GM12878 (cell line): ENCODE measurements at regions of chr13 and their contacts with region 1.

Region 1: DNA sequence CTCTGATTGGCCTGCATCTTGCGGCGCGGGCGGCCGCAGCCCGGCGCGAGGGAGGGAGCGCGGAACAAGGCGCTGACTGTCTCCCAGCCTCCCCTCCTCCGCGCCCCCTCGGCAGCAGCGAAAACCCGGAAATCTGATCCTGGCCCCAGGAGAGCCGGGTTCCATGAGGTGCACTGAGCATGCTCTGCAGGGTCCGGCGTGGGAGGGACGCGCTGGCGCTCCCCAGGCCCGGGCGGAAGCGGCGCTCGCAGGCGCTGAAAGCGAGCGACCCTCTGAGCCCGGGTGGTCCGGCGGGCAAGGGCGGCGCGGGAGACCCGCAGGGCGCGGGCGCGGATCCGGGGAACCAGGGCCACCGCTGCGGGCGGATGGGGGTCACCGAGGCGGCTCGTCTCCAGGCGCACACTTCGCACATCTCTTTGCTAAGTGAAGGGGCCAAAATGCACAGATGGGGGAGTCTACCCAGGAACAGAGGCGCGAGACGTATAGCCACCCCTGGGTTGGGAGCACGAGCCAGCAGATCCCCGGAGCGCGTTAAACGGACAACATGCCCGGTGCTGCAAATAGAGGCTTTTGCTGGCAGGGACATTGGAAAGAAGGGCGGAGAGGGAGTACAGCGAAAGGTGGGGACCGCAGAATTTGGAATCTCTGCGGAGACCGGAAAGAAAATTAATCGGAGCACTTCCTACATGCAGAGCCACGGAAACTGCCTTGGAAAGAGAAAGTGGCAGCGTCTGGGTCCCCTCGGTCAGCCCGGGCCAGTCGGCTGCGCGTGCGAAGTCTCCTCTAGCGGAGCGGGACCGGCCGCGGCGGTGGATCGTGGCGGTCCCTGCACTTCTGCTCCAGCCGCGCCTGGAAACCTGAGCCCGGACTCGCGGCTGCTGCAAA is 510 bp upstream of the PCDH9 start:
- DNase-seq: peak; percentile 15
- ATAC-seq: peak; percentile 99
- H3K4me3 ChIP-seq: peak overlapping the region; percentile 73
- H3K27ac ChIP-seq: no peak overlapping the region
- H3K4me1 ChIP-seq: no peaks in the 10 kb centered on the region; the same call in 1 of the 2 replicates
- H3K27me3 ChIP-seq: peaks cover 1 to 7% of the 10 kb centered on the region in 2 experiments; a peak in 3 of 4 replicates
- CTCF ChIP-seq: no peak
- EP300 ChIP-seq: no peak
- POLR2A ChIP-seq: no peak; the same call in 1 of the 2 replicates
- RAD21 ChIP-seq: no peak

Region 2: DNA sequence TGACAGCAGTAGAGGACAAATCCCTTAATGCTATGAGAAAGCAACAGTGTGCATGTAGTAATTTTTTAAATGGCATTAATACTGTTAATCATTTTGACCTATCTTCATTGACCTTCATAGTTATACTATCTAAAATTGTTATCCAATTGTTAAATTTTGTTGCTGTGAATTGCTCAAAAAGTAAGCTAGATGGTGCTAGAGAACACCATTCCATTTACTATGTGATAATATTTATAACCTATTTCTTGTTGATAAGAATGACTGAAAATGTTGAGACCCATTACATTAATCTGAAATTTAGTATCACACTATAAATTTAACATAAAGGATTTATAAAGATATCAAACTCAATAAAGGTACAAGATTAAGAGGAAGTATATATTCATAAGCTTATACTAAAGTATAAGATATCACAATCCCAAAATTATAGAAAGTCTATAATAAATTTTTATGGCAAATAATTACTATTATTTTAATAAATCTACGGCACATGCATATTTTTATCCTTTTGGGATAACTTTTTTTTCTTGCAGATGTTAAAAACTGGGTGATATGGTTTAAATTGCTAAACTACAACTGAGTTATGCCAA is 1573.8 kb before region 1 on chr13:
- CTCF ChIA-PET with region 1: no interaction called
- POLR2A ChIA-PET with region 1: no interaction called
- RAD21 ChIA-PET with region 1: no interaction called
- SMC1A ChIA-PET with region 1: no interaction called
- in situ Hi-C with region 1: loop called (anchors 5 kb)
- intact Hi-C with region 1: loop called (anchors 5 kb)
- DNase-seq: no peak
- ATAC-seq: peak; percentile 52; the same call in 1 of the 3 replicates
- H3K4me3 ChIP-seq: no peak overlapping the region
- H3K27ac ChIP-seq: no peak overlapping the region
- H3K4me1 ChIP-seq: no peaks in the 10 kb centered on the region
- H3K27me3 ChIP-seq: no peaks in the 10 kb centered on the region
- CTCF ChIP-seq: peak in 1 of 3 experiments; percentile 27; a peak in 3 of 6 replicates
- EP300 ChIP-seq: no peak
- POLR2A ChIP-seq: no peak
- RAD21 ChIP-seq: 0 out of 2 replicates have a peak, but pooled peaks have one; percentile 8

Region 3: GRCh38 chr13:65926750-65927171 is 1303.9 kb before region 1 on chr13:
- CTCF ChIA-PET with region 1: no interaction called
- POLR2A ChIA-PET with region 1: no interaction called
- RAD21 ChIA-PET with region 1: no interaction called
- SMC1A ChIA-PET with region 1: no interaction called
- in situ Hi-C with region 1: no loop called
- intact Hi-C with region 1: loop called (anchors 5 kb)
- DNase-seq: no peak
- ATAC-seq: peak; percentile 76
- H3K4me3 ChIP-seq: no peak overlapping the region
- H3K27ac ChIP-seq: no peak overlapping the region
- H3K4me1 ChIP-seq: no peaks in the 10 kb centered on the region
- H3K27me3 ChIP-seq: no peaks in the 10 kb centered on the region
- CTCF ChIP-seq: peak in 2 of 3 experiments; percentile 35 to 38; a peak in 3 of 6 replicates
- EP300 ChIP-seq: no peak
- POLR2A ChIP-seq: no peak
- RAD21 ChIP-seq: no peak

Region 4: GRCh38 chr13:66543780-66544179 is 686.9 kb before region 1 on chr13:
- CTCF ChIA-PET with region 1: no interaction called
- POLR2A ChIA-PET with region 1: no interaction called
- RAD21 ChIA-PET with region 1: no interaction called
- SMC1A ChIA-PET with region 1: no interaction called
- in situ Hi-C with region 1: no loop called
- intact Hi-C with region 1: loop called (anchors 10 kb)
- DNase-seq: no peak
- ATAC-seq: peak; percentile 64
- H3K4me3 ChIP-seq: no peak overlapping the region
- H3K27ac ChIP-seq: no peak overlapping the region
- H3K4me1 ChIP-seq: no peaks in the 10 kb centered on the region
- H3K27me3 ChIP-seq: no peaks in the 10 kb centered on the region
- CTCF ChIP-seq: peak in 1 of 3 experiments; percentile 28; a peak in 2 of 6 replicates
- EP300 ChIP-seq: no peak
- POLR2A ChIP-seq: no peak
- RAD21 ChIP-seq: no peak

Region 5: DNA sequence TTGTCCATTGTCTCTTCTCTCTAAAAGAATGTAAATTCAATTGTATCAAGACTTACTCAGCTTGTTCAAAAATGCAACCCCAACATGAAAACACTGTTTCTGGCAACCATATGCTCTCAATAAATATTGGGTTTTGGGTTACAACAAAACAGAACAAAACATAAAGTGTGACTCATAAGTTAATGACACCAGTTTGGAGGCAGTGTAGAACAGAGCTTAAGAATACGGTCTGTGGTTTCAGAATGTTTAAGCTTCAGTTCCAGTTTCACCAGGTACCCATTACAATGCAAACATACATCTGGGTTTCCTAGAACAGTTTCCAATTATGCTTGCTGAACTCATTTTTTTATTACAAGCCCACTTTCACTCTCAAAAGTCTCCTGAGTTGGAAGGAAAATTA is 285.2 kb after region 1 on chr13:
- CTCF ChIA-PET with region 1: no interaction called
- POLR2A ChIA-PET with region 1: no interaction called
- RAD21 ChIA-PET with region 1: no interaction called
- SMC1A ChIA-PET with region 1: no interaction called
- in situ Hi-C with region 1: no loop called
- intact Hi-C with region 1: no loop called
- DNase-seq: no peak
- ATAC-seq: peak; percentile 97
- H3K4me3 ChIP-seq: no peak overlapping the region
- H3K27ac ChIP-seq: no peak overlapping the region
- H3K4me1 ChIP-seq: no peaks in the 10 kb centered on the region
- H3K27me3 ChIP-seq: no peaks in the 10 kb centered on the region
- CTCF ChIP-seq: no peak
- EP300 ChIP-seq: no peak; a peak in 1 of 4 replicates
- POLR2A ChIP-seq: no peak
- RAD21 ChIP-seq: no peak